ENCODE measurements at regions of chr21 and their contacts with region 1.

Region 1: GRCh38 chr21:36647279-36648093 is 51.4 kb upstream of the SIM2 start:
- DNase-seq: no peak

Region 2: GRCh38 chr21:37130971-37131370 is 483.5 kb after region 1 on chr21:
- intact Hi-C with region 1: loop called in 1 of 2 experiments (anchors 5 kb)
- DNase-seq: no peak

Measured in posterior vena cava (tissue), 2 donors.